Ascending aorta (tissue), 2 donors: ENCODE measurements at regions of chr12 and their contacts with region 1.

Region 1: DNA sequence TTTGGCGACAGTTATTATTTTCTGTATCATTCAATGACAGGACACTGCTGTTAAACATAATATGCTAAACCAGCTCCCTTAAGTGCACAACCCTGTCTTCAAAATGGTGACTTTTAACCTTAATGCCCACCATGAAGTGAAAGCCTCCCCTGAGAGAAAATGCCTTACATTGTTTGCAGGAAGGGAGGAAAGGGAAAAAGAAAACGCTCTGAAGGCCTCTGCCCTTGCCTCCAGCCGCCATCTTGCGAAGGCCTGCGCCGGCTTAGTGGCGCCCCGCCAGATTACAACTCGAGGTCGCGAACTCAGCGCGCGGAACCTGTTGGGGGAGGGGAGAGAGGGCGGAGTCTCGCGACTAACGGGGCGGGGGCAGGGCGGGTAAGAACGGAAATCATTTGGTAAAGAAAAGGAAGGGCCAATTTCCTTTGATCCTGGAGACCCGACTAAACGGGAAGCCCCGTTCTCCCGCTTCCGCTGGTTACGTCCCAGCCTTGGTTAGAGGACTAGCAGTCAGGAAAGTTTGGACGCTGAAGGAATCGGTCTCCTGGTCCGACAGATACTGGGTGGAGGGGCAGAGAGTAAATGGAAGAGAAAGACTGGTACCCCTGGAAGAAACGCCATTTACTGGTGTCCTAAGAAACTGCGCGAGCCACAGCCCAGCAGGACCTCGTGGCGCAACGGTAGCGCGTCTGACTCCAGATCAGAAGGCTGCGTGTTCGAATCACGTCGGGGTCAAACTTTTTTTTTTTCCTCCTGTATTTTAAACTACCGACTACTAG is 11.6 kb upstream of the TMPO start:
- DNase-seq: peak; percentile 62 to 94
- H3K4me3 ChIP-seq: peak overlapping the region; percentile 51 to 70
- H3K27ac ChIP-seq: peak overlapping the region; percentile 95
- H3K4me1 ChIP-seq: peaks cover 0 to 2% of the 10 kb centered on the region in 2 donors
- H3K27me3 ChIP-seq: no peaks in the 10 kb centered on the region
- CTCF ChIP-seq: no peak

Region 2: DNA sequence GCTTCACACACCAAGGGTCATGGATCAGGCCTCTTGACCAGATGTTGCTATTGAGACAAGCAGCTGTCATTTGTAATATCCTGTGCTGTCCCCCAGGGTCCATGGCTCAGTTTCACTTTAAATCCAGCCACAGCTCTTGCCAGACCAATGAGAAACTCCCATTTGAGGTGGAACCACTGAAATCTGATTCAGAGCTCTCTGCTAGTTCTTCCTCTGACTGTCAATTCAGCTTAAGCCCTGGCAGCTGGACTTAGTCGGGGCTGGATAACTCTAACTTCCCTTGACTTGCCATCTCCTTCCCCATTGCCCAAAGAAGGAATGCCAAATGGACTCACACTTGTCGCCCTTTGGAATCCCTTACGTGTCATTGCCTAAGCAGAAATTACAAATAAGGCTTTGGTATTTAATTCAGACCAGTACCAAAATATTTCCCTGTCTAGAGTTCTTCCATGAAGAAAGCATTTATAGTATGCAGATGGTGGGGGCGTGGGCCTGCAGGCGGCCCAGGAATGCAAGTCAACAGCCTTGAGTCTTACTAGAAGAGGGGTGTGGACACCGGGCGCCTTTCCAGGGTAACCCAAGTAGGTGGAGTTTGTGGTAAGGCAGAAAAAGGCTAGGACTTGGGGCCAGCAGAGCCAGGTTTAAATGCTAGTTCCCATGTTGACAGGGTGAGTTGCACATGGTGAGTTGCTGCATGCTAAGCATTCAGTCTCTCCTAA is 85.3 kb before region 1 on chr12:
- intact Hi-C with region 1: loop called (anchors 1 kb)
- DNase-seq: peak; percentile 60 to 98
- H3K4me3 ChIP-seq: no peak overlapping the region
- H3K27ac ChIP-seq: peak overlapping the region; percentile 76 to 87
- H3K4me1 ChIP-seq: peaks cover 5 to 28% of the 10 kb centered on the region in 2 donors
- H3K27me3 ChIP-seq: no peaks in the 10 kb centered on the region
- CTCF ChIP-seq: no peak

Region 3: GRCh38 chr12:98437166-98437565 is 66.6 kb before region 1 on chr12:
- intact Hi-C with region 1: no loop called
- DNase-seq: no peak
- H3K4me3 ChIP-seq: no peak overlapping the region
- H3K27ac ChIP-seq: no peak overlapping the region
- H3K4me1 ChIP-seq: no peaks in the 10 kb centered on the region
- H3K27me3 ChIP-seq: no peaks in the 10 kb centered on the region
- CTCF ChIP-seq: no peak

Region 4: GRCh38 chr12:98490501-98491453 is 13.0 kb before region 1 on chr12:
- intact Hi-C with region 1: loop called (anchors 1 kb)
- DNase-seq: peak; percentile 32 to 94
- H3K4me3 ChIP-seq: peak overlapping the region; percentile 9 to 28
- H3K27ac ChIP-seq: peak overlapping the region; percentile 59 to 60
- H3K4me1 ChIP-seq: peaks cover 0 to 2% of the 10 kb centered on the region in 2 donors
- H3K27me3 ChIP-seq: no peaks in the 10 kb centered on the region
- CTCF ChIP-seq: peak; percentile 82 to 87 (median 83)

Region 5: GRCh38 chr12:98516184-98516873 is 12.5 kb after region 1 on chr12:
- intact Hi-C with region 1: loop called (anchors 1 kb)
- DNase-seq: peak in 1 of 2 donors; percentile 82
- H3K4me3 ChIP-seq: peak overlapping the region; percentile 87 to 91
- H3K27ac ChIP-seq: peak overlapping the region; percentile 91 to 92
- H3K4me1 ChIP-seq: peaks cover 4 to 20% of the 10 kb centered on the region in 2 donors
- H3K27me3 ChIP-seq: no peaks in the 10 kb centered on the region
- CTCF ChIP-seq: peak; percentile 41 to 85 (median 65)

Region 6: GRCh38 chr12:98593351-98594049 is 89.7 kb after region 1 on chr12 and contains the start of gene SLC25A3:
- intact Hi-C with region 1: loop called (anchors 5 kb)
- DNase-seq: peak; percentile 92 to 98
- H3K4me3 ChIP-seq: peak within 1 kb of the TSS; percentile 91 to 99
- H3K27ac ChIP-seq: peak within 1 kb of the TSS; percentile 97 to 98
- H3K4me1 ChIP-seq: peaks cover 0 to 11% of the 10 kb centered on the region in 2 donors
- H3K27me3 ChIP-seq: no peaks in the 10 kb centered on the region
- CTCF ChIP-seq: no peak
- total RNA-seq, gene SLC25A3: 437 TPM

Region 7: DNA sequence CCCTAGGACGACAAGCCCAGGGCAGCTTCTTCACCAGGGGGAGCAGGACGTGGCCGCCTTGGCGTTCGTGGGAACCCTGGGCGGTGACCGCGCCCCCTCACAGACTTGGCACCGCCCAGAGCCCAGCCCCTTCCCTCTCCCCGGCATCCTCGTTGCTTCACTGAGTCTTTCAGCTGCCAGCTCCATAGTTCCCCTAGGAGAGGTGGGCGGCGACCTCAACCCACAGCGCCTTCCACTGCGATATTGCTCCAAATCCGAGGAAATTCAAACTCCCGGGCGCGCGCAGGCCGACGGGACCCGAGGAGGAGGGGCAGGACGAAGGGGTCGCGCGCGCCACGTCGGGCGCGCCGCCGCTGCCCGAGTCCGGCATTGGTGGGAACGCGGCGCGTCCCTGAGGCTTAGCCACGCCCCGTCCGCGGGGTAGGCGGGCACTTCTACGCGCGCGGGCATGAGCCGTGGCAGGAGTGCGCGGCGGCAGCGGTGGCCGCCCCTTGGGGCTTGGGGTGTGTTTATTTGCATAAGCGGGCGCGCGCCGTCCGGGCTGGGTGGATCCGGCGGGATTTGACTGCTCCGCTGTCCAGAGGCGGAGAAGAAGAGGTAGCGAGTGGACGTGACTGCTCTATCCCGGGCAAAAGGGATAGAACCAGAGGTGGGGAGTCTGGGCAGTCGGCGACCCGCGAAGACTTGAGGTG is 141.1 kb after region 1 on chr12 and contains the starts of genes APAF1 and IKBIP:
- intact Hi-C with region 1: loop called (anchors 5 kb)
- DNase-seq: peak; percentile 93 to 99
- H3K4me3 ChIP-seq: peak within 1 kb of the TSS; percentile 75 to 98
- H3K27ac ChIP-seq: peak within 1 kb of the TSS; percentile 72 to 85
- H3K4me1 ChIP-seq: peaks cover 3 to 7% of the 10 kb centered on the region in 2 donors
- H3K27me3 ChIP-seq: no peaks in the 10 kb centered on the region
- CTCF ChIP-seq: no peak
- total RNA-seq, gene APAF1: 15.5 TPM
- total RNA-seq, gene IKBIP: 12.3 TPM

Region 8: DNA sequence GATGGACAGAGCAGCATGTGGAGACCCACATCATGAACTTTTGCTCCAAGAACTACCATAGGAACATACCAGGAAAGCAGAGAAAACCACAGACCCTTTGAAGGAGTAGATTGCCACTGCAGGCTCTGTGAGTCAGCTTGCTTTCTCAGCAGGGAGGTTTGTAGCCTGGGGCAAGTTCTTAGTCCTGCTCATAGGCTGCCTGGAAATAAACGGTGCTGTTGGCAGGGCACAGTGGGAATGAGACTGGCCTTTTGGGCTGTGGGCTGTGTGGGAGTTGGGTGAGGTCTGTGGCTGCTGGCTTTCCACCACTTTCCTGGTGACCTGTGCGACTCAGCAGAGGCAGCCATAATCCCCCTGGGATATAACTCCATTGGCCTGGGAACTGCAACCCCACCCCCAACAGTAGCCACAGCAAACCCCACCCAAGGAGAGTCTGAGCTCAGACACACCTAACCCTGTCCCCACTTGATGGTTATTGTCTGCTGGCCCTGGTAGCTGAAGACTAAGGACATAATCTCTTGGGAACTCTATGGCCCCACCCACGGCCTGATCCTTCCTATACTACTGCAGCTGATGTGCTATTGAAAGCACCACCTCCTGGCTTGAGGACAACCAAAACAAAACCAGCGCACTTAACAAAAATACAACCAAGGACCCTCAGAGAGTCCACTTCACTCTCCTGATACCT is 951.7 kb after region 1 on chr12:
- intact Hi-C with region 1: loop called (anchors 10 kb)
- DNase-seq: no peak
- H3K4me3 ChIP-seq: no peak overlapping the region
- H3K27ac ChIP-seq: peak overlapping the region in 1 of 2 donors; percentile 74
- H3K4me1 ChIP-seq: peaks cover 0 to 11% of the 10 kb centered on the region in 2 donors
- H3K27me3 ChIP-seq: no peaks in the 10 kb centered on the region
- CTCF ChIP-seq: no peak